HepG2 (cell line): ENCODE measurements at regions of chr3 and their contacts with region 1.

Region 1: GRCh38 chr3:37918627-37919026 is 56.9 kb downstream of the CTDSPL start:
- DNase-seq: no peak
- ATAC-seq: no peak
- H3K4me3 ChIP-seq: no peak overlapping the region
- H3K27ac ChIP-seq: no peak overlapping the region
- H3K4me1 ChIP-seq: peaks cover 70% of the 10 kb centered on the region
- H3K27me3 ChIP-seq: no peaks in the 10 kb centered on the region
- CTCF ChIP-seq: no peak
- EP300 ChIP-seq: no peak
- POLR2A ChIP-seq: no peak
- RAD21 ChIP-seq: no peak

Region 2: DNA sequence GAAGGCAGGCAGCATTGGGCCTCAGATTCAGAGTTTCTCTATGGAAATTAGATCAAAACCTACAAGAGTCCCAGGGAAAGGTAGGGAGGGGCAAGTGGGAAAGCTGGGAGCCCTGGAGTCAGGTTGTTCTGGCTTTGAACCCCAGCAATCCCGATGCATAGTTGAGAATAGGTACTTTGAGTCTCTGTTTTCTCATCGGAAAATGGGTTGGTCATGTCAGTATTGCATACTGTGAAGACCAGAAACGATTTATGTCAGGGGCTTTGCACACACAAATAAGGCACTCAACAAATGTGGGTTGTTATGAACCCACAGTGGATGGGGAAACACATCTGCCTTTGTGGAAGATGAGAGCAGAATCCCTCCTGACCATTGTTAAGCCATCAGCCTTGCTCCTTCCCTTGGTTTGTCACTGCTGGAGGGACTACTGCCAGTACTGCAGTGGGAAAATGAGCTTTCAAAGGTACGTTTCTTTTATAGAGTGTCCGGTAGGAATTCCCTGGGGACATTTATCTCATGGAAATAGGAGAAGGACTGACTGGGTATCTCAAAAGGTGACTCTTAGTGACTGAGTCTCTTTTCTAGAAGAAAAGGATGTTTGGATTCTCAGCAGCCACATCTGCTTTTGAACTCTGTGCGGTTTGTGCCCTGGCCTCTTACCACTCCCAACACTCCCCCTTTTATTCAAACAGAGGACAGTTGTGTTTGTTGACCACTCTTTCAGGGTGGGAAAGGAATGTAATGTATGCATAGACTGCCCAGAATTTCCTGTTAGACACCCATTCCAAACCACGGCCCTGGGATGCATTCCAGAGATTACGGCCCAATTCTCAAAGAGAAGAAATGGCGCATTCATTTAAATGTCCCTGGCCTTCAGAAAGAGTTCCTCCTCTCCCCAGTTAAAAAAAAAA is 17.4 kb after region 1 on chr3:
- CTCF ChIA-PET with region 1: no interaction called
- POLR2A ChIA-PET with region 1: interaction called, 5 read pairs
- in situ Hi-C with region 1: no loop called
- intact Hi-C with region 1: loop called (anchors 2 kb)
- DNase-seq: peak; percentile 98
- ATAC-seq: peak; percentile 97
- H3K4me3 ChIP-seq: peak overlapping the region in 1 of 3 experiments; percentile 41; a peak in 2 of 6 replicates
- H3K27ac ChIP-seq: peak overlapping the region; percentile 86
- H3K4me1 ChIP-seq: peaks cover 95% of the 10 kb centered on the region
- H3K27me3 ChIP-seq: no peaks in the 10 kb centered on the region
- CTCF ChIP-seq: no peak
- EP300 ChIP-seq: peak in 1 of 2 experiments; percentile 92; a peak in 2 of 4 replicates
- POLR2A ChIP-seq: peak in 1 of 2 experiments; percentile 52; a peak in 2 of 4 replicates
- RAD21 ChIP-seq: no peak

Region 3: DNA sequence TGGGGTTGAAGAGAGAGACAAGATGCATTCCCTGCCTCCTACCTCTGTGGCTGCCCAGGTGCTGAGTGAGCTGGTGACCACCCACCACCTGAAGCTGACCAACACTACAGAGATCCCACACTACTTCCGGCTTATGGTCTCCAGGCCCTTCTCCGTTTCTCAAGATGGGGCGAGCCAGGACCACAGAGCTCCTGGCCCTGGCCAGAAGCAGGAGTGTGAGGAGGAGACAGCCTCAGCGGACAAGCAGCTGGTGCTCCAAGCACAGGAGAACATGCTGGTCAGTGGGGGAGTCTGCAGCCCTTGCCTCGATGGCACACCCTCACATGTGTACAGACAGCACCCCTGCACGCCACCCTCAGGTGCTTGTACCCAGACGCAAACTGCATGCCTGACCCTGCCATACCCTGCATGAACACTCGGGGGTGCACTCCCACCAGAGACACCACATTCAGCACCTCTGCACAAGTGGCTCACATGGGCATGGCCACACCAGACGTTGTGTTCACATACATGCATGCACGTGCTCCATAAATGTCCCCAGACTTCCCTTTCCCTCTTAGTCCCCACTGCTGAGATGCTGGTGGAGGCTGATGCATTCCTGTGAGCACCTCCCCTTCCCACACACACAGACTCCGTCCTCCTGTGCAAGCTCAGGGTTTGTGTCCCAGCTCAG is 199.3 kb after region 1 on chr3:
- CTCF ChIA-PET with region 1: no interaction called
- POLR2A ChIA-PET with region 1: no interaction called
- in situ Hi-C with region 1: no loop called
- intact Hi-C with region 1: no loop called
- DNase-seq: peak; percentile 65
- ATAC-seq: peak; percentile 53
- H3K4me3 ChIP-seq: no peak overlapping the region
- H3K27ac ChIP-seq: peak overlapping the region; percentile 14
- H3K4me1 ChIP-seq: peaks cover 18% of the 10 kb centered on the region; the same call in 1 of the 2 replicates
- H3K27me3 ChIP-seq: peaks cover 0 to 8% of the 10 kb centered on the region in 2 experiments; a peak in 1 of 5 replicates
- CTCF ChIP-seq: peak; percentile 98
- EP300 ChIP-seq: no peak
- POLR2A ChIP-seq: peak; percentile 44 to 76; a peak in 3 of 4 replicates
- RAD21 ChIP-seq: peak; percentile 94